Left colon (tissue), 2 donors: ENCODE measurements at regions of chr1 and their contacts with region 1.

Region 1: DNA sequence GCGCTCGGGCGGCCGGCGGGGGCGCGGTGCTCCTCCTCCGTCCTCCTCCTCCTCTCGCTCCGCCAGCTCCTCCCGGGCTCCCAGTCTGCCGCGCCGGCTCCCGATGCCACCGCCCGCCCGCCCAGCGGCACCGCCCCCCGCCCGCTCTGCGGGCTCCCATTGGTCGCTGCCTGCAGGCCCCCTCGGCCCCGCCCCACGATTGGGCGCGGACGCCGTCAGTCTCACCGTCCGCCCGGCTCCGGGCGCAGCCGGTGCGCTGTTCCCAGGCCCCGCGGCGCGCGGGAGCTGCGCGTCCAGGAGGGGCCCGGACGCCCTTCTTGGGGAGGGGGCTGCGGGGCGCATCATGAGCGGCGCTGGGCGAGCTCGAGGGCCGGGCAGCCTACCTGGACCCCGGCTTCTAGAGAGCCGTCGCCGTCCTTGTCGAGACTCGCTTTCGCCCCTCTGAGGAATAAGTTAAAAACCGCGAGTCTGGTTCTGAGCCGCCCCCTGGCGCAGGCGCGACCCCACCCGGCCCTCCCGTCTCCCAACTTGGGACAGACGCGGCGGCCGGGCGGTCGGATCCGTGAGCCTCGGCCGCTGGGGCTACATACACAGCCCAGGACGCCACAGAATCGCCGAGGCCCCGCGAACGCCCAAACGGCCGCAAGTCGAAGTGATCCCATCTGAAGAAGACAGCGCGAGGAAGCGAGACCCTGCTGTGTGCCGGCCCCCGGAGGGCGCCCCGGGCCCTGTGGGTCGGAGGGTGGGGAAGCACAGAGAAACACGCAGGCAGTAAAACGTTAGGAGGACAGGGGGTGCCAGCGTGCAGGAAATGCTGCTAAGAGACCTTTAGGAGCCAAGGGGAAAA is at the start of gene SIPA1L2:
- DNase-seq: peak; percentile 93
- ATAC-seq: peak; percentile 80
- total RNA-seq, gene SIPA1L2: 76.5 to 89.8 TPM

Region 2: DNA sequence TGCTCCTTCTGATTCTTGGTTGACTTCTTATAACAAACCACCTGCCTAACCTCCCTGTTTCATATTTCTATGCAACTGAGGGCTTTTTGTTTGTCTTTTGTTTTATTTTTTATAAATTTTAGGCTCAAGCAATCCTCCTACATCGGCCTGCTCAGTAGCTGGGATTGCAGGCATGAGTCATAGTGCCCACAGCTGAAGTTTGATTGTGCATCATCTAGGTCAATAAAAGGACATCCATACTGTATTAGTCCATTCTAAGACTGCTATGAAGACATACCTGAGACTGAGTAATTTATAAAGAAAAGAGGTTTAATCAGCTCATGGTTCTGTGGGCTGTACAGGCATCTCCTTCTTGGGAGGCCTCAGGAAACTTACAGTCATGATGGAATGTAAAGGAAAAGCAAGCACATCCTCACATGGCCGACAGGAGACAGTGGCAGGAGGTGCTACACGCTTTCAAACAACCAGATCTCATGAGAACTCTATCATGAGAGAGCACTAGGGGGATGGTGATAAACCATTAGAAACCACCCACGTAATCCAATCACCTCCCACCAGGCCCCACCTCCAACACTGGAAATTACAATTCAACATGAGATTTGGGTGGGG is 285.4 kb before region 1 on chr1:
- intact Hi-C with region 1: no loop called
- DNase-seq: no peak
- ATAC-seq: no peak

Region 3: DNA sequence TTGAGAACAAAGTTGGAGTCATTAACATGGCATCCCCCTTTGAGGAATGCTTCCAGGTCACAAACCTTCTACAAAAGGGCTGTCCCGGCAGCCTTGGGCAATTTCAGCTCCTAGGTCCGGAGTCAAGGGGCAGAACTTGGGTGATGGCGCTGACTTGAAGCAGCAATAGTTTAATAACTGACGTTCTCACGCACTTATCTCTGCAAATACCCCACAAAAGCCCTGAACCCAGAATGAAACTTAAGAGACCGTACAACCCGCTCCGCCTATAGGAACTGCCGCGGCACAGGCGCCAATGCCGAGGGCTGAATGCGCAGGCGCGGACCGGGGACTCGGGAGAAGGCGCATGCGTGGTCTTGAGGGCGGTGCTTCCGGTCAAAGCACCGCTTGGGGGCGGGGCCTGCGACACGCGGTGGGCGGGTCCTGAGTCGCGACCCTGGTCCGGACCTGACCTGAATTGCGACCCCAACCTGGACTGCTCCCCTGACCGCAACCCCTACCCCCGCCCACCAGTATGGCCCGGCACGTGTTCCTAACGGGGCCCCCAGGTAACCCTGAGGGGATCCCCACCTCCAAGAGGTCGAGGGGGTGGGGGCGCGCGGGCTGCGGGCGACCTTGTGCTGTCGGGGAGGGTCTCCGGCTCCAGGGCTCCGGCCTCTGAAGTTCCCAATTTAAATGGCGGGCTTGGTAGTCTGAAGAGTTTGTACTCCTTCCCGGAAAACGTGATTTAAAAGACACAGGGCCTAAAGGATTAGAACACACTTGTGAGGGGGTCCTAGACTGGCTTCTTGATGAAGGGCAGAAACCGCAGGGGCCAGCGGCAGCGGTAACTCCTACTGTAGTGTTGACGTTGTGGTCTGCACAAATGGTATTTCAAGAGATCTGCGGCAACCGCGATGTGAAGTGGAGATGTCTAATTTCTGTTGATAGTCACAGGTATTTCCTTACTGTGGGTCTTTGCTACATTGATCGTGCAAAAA is 320.2 kb after region 1 on chr1 and contains the start of gene NTPCR:
- intact Hi-C with region 1: loop called in 1 of 2 experiments (anchors 10 kb)
- DNase-seq: peak; percentile 91 to 97
- ATAC-seq: peak; percentile 89
- total RNA-seq, gene NTPCR: 51.2 to 54.0 TPM